Esophagus muscularis mucosa (tissue), 4 donors: ENCODE measurements at regions of chr4 and their contacts with region 1.

Region 1: GRCh38 chr4:25862411-25863346 is at the start of gene SEL1L3:
- DNase-seq: no peak
- H3K4me3 ChIP-seq: peak within 1 kb of the TSS; percentile 68 to 81 (median 74)
- H3K27ac ChIP-seq: peak within 1 kb of the TSS; percentile 54 to 60 (median 58)
- H3K4me1 ChIP-seq: peaks cover 27 to 39% (median 32%) of the 10 kb centered on the region in 4 donors
- H3K27me3 ChIP-seq: peaks cover 0 to 27% (median 5%) of the 10 kb centered on the region in 4 donors
- CTCF ChIP-seq: no peak
- EP300 ChIP-seq: no peak
- POLR2A ChIP-seq: no peak
- total RNA-seq, gene SEL1L3: 3.3 to 11.7 (median 5.7) TPM

Region 2: GRCh38 chr4:25813448-25814106 is 49.1 kb before region 1 on chr4:
- intact Hi-C with region 1: no loop called
- DNase-seq: no peak
- H3K4me3 ChIP-seq: no peak overlapping the region
- H3K27ac ChIP-seq: peak overlapping the region; percentile 22 to 60 (median 28)
- H3K4me1 ChIP-seq: peaks cover 14 to 31% (median 24%) of the 10 kb centered on the region in 4 donors
- H3K27me3 ChIP-seq: no peaks in the 10 kb centered on the region
- CTCF ChIP-seq: no peak
- EP300 ChIP-seq: no peak
- POLR2A ChIP-seq: no peak

Region 3: DNA sequence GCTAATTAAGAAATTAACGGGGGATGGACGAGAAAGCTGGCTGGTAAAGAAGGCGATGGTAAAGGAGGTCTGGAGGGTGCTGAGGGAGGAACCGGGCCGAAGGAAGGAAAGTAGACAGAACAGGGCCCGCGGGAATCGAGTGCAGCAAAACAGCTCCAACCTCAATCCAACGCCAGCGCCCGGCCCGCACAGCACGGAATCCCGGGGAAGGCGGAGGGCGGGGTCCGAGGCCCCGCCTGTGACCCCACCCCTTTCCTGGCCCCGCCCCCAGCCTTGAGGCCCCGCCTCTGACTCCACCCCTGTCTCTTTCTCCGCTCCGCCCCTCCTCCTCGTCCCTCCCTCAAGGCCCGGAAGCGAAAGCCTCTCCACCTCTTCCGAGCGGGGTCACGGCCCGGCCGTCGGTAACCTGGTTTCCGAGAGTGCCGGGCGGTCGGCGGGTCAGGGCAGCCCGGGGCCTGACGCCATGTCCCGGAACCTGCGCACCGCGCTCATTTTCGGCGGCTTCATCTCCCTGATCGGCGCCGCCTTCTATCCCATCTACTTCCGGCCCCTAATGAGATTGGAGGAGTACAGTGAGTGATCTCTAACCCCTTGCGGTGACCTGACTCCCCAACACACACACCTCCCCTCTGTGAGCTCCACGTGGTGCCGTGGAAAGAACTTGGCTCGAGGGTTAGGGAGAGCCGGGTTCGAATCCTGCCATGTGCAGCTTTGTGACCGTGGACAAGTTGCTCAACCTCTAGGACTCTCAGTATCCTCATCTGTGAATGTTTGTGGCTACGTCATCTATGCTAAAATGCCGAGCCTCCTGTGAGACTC is 51.4 kb after region 1 on chr4 and contains the start of gene SMIM20:
- intact Hi-C with region 1: loop called (anchors 10 kb)
- DNase-seq: peak; percentile 97
- H3K4me3 ChIP-seq: peak within 1 kb of the TSS; percentile 72 to 87 (median 76)
- H3K27ac ChIP-seq: peak within 1 kb of the TSS; percentile 85 to 92 (median 88)
- H3K4me1 ChIP-seq: peaks cover 21 to 27% (median 22%) of the 10 kb centered on the region in 4 donors
- H3K27me3 ChIP-seq: no peaks in the 10 kb centered on the region
- CTCF ChIP-seq: no peak
- EP300 ChIP-seq: peak; percentile 46
- POLR2A ChIP-seq: no peak
- total RNA-seq, gene SMIM20: 24.0 to 33.2 (median 26.9) TPM